ENCODE measurements at regions of chr6 and their contacts with region 1.

Region 1: DNA sequence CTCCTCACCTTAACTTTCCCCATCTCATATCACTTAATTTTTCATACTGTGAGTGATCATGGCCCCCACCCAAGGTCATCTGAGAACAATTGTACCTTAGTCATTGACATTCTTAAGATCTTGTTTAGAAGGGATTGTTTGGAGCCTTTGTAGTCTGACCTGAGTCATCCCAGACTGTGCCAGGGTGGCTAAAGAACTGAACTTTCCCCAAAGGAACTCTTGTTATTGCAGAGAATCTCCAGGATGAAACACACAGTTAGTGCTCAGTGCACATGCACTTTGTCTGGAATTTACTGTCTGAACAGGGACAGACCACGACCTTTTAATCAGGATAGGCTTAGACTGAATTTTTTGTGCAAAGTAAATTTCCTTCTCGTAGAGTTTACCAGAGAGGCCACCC is 112.6 kb upstream of the CCN2 start:
- DNase-seq: peak; percentile 98
- H3K4me3 ChIP-seq: no peak overlapping the region
- H3K27ac ChIP-seq: peak overlapping the region; percentile 99
- H3K4me1 ChIP-seq: peaks cover 72% of the 10 kb centered on the region
- H3K27me3 ChIP-seq: no peaks in the 10 kb centered on the region
- CTCF ChIP-seq: no peak
- POLR2A ChIP-seq: no peak

Region 2: DNA sequence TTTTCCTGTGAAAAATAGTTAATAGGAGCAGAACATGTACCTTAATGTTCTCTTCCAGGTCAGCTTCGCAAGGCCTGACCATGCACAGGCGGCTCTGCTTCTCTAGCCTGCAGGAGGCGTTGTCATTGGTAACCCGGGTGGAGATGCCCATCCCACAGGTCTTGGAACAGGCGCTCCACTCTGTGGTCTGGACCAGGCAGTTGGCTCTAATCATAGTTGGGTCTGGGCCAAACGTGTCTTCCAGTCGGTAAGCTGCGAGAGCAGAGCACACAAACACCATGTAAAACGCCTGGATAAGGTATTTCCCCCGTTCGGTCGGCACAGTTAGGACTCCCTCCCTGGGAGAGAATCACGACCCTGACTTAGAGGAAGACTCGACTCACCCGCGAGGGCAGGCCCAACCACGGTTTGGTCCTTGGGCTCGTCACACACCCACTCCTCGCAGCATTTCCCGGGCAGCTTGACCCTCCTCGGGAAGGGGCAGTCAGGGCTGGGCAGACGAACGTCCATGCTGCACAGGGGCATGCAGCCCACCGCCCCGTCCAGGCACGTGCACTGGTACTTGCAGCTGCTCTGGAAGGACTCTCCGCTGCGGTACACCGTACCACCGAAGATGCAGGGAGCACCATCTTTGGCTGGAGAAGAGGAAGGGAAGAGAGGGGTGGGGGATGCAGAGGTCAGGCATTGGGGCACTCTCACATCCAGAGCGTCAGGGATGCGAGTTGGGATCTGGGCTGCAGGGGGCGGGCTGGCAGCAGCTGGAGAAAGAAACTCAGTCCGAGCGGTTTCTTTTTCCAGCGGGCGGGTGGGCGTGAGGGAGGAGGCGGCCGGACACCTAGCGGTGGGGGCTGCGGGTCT is 113.6 kb before region 1 on chr6:
- CTCF ChIA-PET with region 1: interaction called, 8 read pairs
- POLR2A ChIA-PET with region 1: interaction called, 167 read pairs
- dilution Hi-C with region 1: no loop called
- intact Hi-C with region 1: loop called (anchors 1 kb)
- DNase-seq: peak; percentile 55
- H3K4me3 ChIP-seq: peak overlapping the region; percentile 10 to 93 (median 88)
- H3K27ac ChIP-seq: peak overlapping the region; percentile 69
- H3K4me1 ChIP-seq: peaks cover 35% of the 10 kb centered on the region
- H3K27me3 ChIP-seq: no peaks in the 10 kb centered on the region
- CTCF ChIP-seq: peak; percentile 5 to 37
- POLR2A ChIP-seq: peak; percentile 94

Region 3: DNA sequence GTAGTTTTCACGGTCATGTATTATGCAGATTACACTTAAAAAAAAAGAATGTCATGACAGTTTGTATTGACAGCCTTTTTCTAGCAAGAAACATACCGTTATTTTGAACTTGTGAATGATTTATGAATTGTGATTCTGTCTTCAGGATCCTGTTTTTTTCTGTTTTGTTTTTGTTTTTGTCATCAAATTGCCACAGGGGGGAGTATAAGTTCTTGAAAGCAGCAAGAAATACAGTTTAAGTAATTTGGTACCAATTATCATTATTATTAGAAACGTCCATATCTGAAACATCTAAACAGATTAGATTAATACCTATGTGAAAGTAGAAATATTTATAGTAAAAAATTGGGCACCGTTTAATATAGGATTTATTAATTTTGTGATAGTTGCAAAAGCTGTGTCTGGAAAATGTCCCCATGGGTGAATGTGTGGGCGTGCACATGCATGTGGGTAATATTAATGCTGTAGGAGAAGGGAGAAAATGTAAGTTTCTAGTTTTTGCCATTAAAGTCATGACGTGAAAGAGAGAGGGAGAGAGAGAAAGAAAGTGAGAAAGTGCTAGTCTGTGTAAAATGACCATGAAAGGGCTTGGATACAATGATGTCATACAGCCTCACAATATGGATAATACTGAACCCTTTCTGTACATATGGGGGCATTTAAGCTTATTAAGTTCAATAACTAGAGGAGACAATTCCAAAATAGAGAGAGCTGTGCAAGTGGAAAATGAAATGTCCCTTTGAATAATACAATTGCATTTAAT is 103.2 kb before region 1 on chr6:
- CTCF ChIA-PET with region 1: interaction called, 11 read pairs
- POLR2A ChIA-PET with region 1: interaction called, 14 read pairs
- dilution Hi-C with region 1: no loop called
- intact Hi-C with region 1: loop called (anchors 1 kb)
- DNase-seq: peak; percentile 76
- H3K4me3 ChIP-seq: no peak overlapping the region
- H3K27ac ChIP-seq: peak overlapping the region; percentile 19
- H3K4me1 ChIP-seq: peaks cover 11% of the 10 kb centered on the region
- H3K27me3 ChIP-seq: no peaks in the 10 kb centered on the region
- CTCF ChIP-seq: peak in 1 of 2 donors; percentile 12
- POLR2A ChIP-seq: no peak

Region 4: DNA sequence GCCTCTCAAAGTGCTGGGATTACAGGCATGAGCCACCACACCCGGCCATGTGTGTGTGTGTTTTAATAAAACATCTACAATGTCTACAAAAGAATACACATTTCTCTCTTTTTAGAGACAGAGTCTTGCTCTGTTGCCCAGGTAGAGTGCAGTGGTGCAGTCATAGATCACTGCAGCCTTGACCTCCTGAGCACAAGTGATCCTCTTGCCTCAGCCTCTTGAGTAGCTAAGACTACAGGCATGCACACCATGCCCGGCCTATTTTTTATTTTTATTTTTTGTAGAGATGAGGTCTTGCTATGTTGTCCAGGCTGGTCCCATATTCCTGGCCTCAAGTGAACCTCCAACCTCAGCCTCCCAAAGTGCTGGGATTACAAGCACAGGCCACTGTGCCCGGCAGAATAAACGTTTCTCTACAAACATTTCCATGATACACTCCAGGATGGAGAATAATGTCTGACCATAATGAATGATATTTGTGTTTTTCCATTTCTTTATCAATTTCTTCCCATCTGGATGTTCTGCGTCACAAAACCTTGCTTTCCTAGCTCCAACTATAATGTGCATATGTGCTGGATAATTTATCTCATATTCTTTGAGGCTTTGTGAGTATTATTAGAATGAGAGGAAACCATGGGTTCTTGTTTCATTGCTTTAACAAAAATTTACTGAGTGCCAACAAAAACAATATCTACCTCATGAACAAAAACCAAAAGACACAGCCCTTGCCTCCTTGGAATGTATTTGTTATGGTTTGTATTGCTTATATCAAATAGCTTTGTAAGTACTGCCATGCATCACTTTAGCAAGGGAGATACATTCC is 84.0 kb before region 1 on chr6:
- CTCF ChIA-PET with region 1: interaction called, 3 read pairs
- POLR2A ChIA-PET with region 1: interaction called, 5 read pairs
- dilution Hi-C with region 1: no loop called
- intact Hi-C with region 1: loop called (anchors 1 kb)
- DNase-seq: peak; percentile 95
- H3K4me3 ChIP-seq: no peak overlapping the region
- H3K27ac ChIP-seq: peak overlapping the region; percentile 74
- H3K4me1 ChIP-seq: peaks cover 37% of the 10 kb centered on the region
- H3K27me3 ChIP-seq: no peaks in the 10 kb centered on the region
- CTCF ChIP-seq: no peak
- POLR2A ChIP-seq: no peak

Region 5: DNA sequence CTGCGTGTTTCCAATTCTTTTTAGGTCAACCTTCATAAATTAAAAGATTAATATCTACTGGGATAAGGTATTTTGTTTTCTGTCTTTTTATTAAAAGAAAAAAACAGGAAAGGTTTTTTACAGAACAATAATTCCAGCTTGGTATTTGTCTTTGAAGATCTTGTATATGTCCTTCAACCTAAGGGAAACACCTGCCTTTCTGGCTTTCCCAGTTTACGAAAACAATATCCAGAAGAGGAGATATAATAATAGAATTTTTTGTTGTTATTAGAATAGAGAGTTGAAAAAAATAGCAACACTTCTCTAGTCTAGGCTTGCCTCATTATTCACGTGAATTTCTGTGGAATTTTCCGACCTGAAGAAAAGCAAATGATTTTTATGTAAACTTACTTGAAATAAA is 74.7 kb before region 1 on chr6:
- CTCF ChIA-PET with region 1: no interaction called
- POLR2A ChIA-PET with region 1: no interaction called
- dilution Hi-C with region 1: no loop called
- intact Hi-C with region 1: loop called (anchors 1 kb)
- DNase-seq: peak; percentile 83
- H3K4me3 ChIP-seq: no peak overlapping the region
- H3K27ac ChIP-seq: no peak overlapping the region
- H3K4me1 ChIP-seq: no peaks in the 10 kb centered on the region
- H3K27me3 ChIP-seq: no peaks in the 10 kb centered on the region
- CTCF ChIP-seq: no peak
- POLR2A ChIP-seq: no peak

Region 6: GRCh38 chr6:132131758-132132157 is 68.0 kb after region 1 on chr6:
- CTCF ChIA-PET with region 1: interaction called, 5 read pairs
- POLR2A ChIA-PET with region 1: interaction called, 23 read pairs
- dilution Hi-C with region 1: no loop called
- intact Hi-C with region 1: loop called (anchors 1 kb)
- DNase-seq: peak; percentile 99
- H3K4me3 ChIP-seq: peak overlapping the region in 1 of 3 experiments; percentile 95
- H3K27ac ChIP-seq: peak overlapping the region; percentile 100
- H3K4me1 ChIP-seq: peaks cover 54% of the 10 kb centered on the region
- H3K27me3 ChIP-seq: no peaks in the 10 kb centered on the region
- CTCF ChIP-seq: no peak
- POLR2A ChIP-seq: no peak

Region 7: DNA sequence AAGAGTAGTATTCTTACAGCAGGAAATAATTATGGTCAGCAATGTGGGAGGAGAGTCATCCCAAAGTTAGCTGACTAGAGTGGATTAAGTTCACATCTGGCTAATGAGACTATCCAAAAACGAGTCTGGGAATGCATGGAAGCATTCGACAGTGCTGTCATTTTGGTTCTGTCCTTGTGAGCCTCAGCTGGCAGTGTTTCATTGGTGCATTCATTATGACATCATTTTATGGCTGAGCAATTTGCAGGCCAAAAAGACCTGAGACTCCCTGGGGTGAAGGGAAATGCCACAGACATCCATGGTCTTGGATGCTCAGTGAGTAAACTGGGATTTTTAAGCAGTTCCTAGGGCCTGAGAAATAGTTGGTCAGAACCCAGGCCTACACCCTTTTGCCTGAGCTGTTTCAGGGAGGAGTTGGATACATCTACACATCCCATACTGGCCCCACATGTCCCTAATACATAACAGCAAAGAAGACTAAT is 83.8 kb after region 1 on chr6:
- CTCF ChIA-PET with region 1: no interaction called
- POLR2A ChIA-PET with region 1: no interaction called
- dilution Hi-C with region 1: no loop called
- intact Hi-C with region 1: no loop called
- DNase-seq: no peak
- H3K4me3 ChIP-seq: no peak overlapping the region
- H3K27ac ChIP-seq: no peak overlapping the region
- H3K4me1 ChIP-seq: peaks cover 9% of the 10 kb centered on the region
- H3K27me3 ChIP-seq: no peaks in the 10 kb centered on the region
- CTCF ChIP-seq: no peak
- POLR2A ChIP-seq: no peak

Region 8: DNA sequence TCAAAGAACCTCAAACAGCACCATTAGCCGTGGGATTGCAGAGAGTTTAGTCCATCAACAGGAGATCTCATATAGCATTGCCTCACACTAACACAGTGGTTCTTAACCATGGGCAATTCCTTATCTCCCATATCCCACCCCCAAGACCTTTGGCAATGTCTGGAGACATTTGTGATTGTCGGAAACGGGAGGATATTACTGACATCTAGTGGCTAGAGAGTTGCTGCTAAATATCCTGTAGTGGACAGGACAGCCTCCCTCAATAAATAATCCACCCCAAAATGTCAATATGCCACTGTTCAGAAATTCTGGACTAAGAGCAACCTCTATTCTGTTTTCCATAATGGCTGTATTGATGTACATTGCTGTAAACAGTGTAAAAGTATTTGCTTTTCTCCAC is 97.5 kb after region 1 on chr6:
- CTCF ChIA-PET with region 1: interaction called, 3 read pairs
- POLR2A ChIA-PET with region 1: no interaction called
- dilution Hi-C with region 1: no loop called
- intact Hi-C with region 1: loop called (anchors 1 kb)
- DNase-seq: peak; percentile 70
- H3K4me3 ChIP-seq: no peak overlapping the region
- H3K27ac ChIP-seq: peak overlapping the region; percentile 5
- H3K4me1 ChIP-seq: peaks cover 7% of the 10 kb centered on the region
- H3K27me3 ChIP-seq: no peaks in the 10 kb centered on the region
- CTCF ChIP-seq: peak; percentile 34 to 41
- POLR2A ChIP-seq: no peak